PC-3 (cell line): ENCODE measurements at regions of chr2 and their contacts with region 1.

Region 1: DNA sequence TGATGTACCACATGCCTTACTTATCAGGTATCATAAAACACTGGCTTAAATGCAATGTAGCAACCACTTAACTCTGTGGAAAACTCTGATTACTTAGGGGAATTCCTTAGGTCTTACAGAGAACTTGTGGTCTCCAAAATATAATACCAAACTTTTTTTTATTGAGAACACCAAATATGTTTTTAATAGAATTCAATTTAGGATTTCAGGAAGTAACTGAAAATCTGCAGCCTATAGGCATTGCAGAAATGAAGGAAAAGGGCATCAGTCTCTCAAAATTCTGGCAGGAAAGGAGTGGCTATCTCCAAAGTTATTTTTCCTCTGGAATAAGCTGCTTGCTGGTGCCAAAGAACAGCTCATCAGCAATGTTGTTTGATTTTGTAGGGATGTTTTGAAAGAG is 105.3 kb upstream of the UGP2 start:
- DNase-seq: peak; percentile 45
- ATAC-seq: peak; percentile 56
- H3K4me3 ChIP-seq: no peak overlapping the region
- H3K27ac ChIP-seq: peak overlapping the region; percentile 65
- H3K4me1 ChIP-seq: peaks cover 52% of the 10 kb centered on the region
- H3K27me3 ChIP-seq: no peaks in the 10 kb centered on the region
- CTCF ChIP-seq: no peak

Region 2: GRCh38 chr2:63643486-63643885 is 92.9 kb before region 1 on chr2:
- CTCF ChIA-PET with region 1: no interaction called
- POLR2A ChIA-PET with region 1: no interaction called
- intact Hi-C with region 1: no loop called
- DNase-seq: no peak
- ATAC-seq: no peak
- H3K4me3 ChIP-seq: no peak overlapping the region
- H3K27ac ChIP-seq: no peak overlapping the region
- H3K4me1 ChIP-seq: no peaks in the 10 kb centered on the region
- H3K27me3 ChIP-seq: no peaks in the 10 kb centered on the region
- CTCF ChIP-seq: no peak

Region 3: DNA sequence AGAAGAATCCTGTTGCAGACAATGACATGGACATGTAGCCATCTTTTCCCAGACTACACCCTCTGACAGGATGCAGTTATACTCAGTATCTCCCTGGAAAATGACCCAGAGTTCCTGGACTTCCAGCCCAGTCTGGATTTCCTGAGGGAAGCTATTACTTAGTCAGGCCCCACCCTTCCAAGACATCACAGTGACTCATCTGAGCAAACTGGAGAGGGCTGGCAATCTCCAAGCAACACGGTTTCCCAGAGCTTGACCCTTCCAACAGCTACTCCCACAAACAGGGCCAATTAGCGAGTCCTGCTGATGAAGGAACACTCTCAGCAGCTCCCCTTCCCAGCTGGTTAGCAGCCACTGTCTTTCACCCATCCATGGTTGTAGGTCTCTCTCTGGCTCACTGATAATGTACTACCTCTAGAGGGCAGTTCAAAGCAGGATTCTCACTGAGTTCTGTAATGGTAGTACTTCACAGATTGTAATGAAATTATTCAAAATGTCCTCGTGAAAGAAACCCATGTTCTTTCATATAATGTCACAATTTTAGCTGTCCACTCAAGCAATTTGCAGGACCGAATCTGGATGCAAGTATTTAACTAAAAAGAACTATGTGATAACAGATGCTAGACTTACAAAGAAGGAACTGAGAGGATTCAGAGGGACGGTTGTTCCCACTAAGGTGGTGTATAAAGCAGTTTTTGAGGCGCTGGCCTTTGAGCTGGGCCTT is 37.4 kb before region 1 on chr2:
- CTCF ChIA-PET with region 1: no interaction called
- POLR2A ChIA-PET with region 1: interaction called, 6 read pairs
- intact Hi-C with region 1: loop called (anchors 1 kb)
- DNase-seq: peak; percentile 93
- ATAC-seq: peak; percentile 89
- H3K4me3 ChIP-seq: peak overlapping the region; percentile 34
- H3K27ac ChIP-seq: peak overlapping the region; percentile 93
- H3K4me1 ChIP-seq: peaks cover 41% of the 10 kb centered on the region
- H3K27me3 ChIP-seq: no peaks in the 10 kb centered on the region
- CTCF ChIP-seq: peak; percentile 72